Heart right ventricle (tissue), 16 donors: ENCODE measurements at regions of chr6 and their contacts with region 1.

Region 1: DNA sequence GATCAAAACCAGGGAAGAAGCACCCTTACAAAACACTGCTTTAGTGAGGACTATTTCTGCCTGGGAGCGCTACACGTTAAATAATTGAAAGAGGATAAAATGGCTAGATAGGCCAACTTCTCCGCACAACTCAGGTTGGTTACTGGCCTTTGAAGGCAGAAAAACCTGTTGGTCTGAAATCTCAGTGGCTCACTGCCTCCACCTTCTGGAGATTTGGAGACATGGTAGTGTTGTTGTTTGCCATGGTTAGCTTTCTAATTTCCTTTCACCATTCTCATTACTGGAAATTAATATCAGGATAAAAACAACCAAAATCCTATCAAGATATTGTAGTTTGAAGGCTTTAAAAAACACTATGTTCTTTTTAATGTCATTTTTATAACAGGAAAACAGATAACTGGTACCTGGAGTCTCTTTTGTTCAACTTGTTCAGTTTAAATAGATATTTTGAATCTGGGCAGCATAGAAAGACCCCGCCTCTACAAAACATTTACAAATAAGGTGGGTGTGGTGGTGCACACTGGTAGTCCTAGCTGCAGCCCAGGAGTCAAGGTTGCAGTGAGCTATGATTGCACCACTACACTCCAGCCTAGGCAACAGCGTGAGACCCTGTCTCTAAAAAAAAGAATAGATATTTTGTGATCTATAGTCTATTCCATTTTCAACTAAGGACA is 27.5 kb upstream of the BCLAF1 start:
- DNase-seq: peak in 1 of 2 donors; percentile 45
- ATAC-seq: peak in 5 of 8 donors; percentile 52 to 73 (median 62)
- H3K4me3 ChIP-seq: no peak overlapping the region
- H3K27ac ChIP-seq: no peak overlapping the region
- H3K4me1 ChIP-seq: no peaks in the 10 kb centered on the region
- H3K27me3 ChIP-seq: peaks cover 0 to 6% (median 0%) of the 10 kb centered on the region in 7 donors
- CTCF ChIP-seq: peak; percentile 73 to 88 (median 86)

Region 2: GRCh38 chr6:135451693-135452092 is 865.5 kb before region 1 on chr6:
- intact Hi-C with region 1: loop called in 2 of 10 experiments (anchors 5 kb)
- DNase-seq: no peak
- ATAC-seq: peak in 1 of 8 donors; percentile 28
- H3K4me3 ChIP-seq: no peak overlapping the region
- H3K27ac ChIP-seq: no peak overlapping the region
- H3K4me1 ChIP-seq: no peaks in the 10 kb centered on the region
- H3K27me3 ChIP-seq: no peaks in the 10 kb centered on the region
- CTCF ChIP-seq: peak; percentile 55 to 80 (median 73)

Region 3: GRCh38 chr6:135506270-135506997 is 810.7 kb before region 1 on chr6:
- intact Hi-C with region 1: loop called in 7 of 10 experiments (anchors 2 to 10 kb)
- DNase-seq: no peak
- ATAC-seq: peak in 2 of 8 donors; percentile 59 to 66
- H3K4me3 ChIP-seq: no peak overlapping the region
- H3K27ac ChIP-seq: no peak overlapping the region
- H3K4me1 ChIP-seq: peaks cover 0 to 4% (median 0%) of the 10 kb centered on the region in 9 donors
- H3K27me3 ChIP-seq: no peaks in the 10 kb centered on the region
- CTCF ChIP-seq: peak; percentile 26 to 75 (median 63)

Region 4: GRCh38 chr6:136031982-136032381 is 285.2 kb before region 1 on chr6:
- intact Hi-C with region 1: no loop called
- DNase-seq: peak in 1 of 2 donors; percentile 46
- ATAC-seq: peak in 7 of 8 donors; percentile 46 to 68 (median 53)
- H3K4me3 ChIP-seq: no peak overlapping the region
- H3K27ac ChIP-seq: no peak overlapping the region
- H3K4me1 ChIP-seq: peaks cover 4 to 52% (median 32%) of the 10 kb centered on the region in 9 donors
- H3K27me3 ChIP-seq: no peaks in the 10 kb centered on the region
- CTCF ChIP-seq: peak in 8 of 9 donors; percentile 28 to 72 (median 56)